CD8-positive, alpha-beta T cell (primary cell): ENCODE measurements at regions of chr6 and their contacts with region 1.

Region 1: DNA sequence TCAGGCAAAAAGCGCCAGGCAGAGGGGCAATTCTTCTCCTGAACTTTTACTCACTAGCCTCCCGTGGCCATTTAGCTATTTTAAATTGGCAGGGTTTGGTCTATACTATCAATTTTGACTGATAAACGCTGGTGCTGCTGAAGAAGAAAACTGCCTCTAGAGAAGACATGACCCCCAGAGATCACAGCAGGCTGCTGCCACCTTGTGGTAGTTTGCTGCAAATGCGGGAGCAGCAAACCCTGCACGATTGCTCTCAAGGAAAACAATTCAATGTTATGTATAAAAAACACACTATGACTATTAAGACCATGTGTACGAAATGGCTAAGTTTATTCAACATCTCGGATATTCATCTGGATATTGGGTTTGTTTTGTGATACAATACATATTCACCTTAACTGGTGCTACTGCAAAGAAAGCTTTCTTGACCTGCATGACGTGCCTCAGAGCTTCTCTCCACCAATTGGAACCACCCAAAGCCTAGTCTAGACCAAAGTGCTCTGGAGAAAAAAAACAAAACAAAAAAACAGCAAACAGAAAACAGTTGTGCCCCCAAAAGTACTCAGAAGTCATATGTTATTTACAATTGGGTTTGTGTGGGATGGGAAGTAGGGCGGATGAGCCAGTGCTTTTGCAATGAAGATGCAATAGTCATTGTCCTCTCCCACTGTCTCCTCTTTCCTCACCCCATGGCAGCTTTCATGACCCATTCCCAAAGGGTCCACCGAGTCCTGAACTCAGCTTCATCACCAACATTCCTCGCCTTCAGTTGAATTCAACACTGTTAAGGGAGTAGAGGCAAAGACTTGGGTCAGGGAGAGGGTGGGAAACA is 19.6 kb upstream of the IL17F start:
- DNase-seq: peak; percentile 44 to 79 (median 67)
- ATAC-seq: peak; percentile 79
- H3K4me3 ChIP-seq: no peak overlapping the region
- H3K4me3 Mint-ChIP-seq: no peak overlapping the region
- H3K27ac ChIP-seq: no peak overlapping the region
- H3K27ac Mint-ChIP-seq: no peak overlapping the region
- H3K4me1 ChIP-seq: peaks cover 12% of the 10 kb centered on the region
- H3K4me1 Mint-ChIP-seq: peaks cover 14% of the 10 kb centered on the region
- H3K27me3 ChIP-seq: no peaks in the 10 kb centered on the region
- H3K27me3 Mint-ChIP-seq: no peaks in the 10 kb centered on the region
- CTCF ChIP-seq: peak; percentile 96

Region 2: GRCh38 chr6:50816115-50816675 is 1447.7 kb before region 1 on chr6:
- CTCF ChIA-PET with region 1: no interaction called
- POLR2A ChIA-PET with region 1: no interaction called
- intact Hi-C with region 1: loop called in 1 of 2 experiments (anchors 5 kb)
- DNase-seq: peak in 8 of 9 experiments; percentile 19 to 54 (median 38)
- ATAC-seq: no peak
- H3K4me3 ChIP-seq: peak overlapping the region; percentile 24 to 39
- H3K4me3 Mint-ChIP-seq: peak overlapping the region; percentile 82
- H3K27ac ChIP-seq: no peak overlapping the region
- H3K27ac Mint-ChIP-seq: no peak overlapping the region
- H3K4me1 ChIP-seq: no peaks in the 10 kb centered on the region
- H3K4me1 Mint-ChIP-seq: peaks cover 19% of the 10 kb centered on the region
- H3K27me3 ChIP-seq: peaks cover 6 to 9% of the 10 kb centered on the region in 2 experiments
- H3K27me3 Mint-ChIP-seq: peaks cover 59% of the 10 kb centered on the region
- CTCF ChIP-seq: peak; percentile 55

Region 3: DNA sequence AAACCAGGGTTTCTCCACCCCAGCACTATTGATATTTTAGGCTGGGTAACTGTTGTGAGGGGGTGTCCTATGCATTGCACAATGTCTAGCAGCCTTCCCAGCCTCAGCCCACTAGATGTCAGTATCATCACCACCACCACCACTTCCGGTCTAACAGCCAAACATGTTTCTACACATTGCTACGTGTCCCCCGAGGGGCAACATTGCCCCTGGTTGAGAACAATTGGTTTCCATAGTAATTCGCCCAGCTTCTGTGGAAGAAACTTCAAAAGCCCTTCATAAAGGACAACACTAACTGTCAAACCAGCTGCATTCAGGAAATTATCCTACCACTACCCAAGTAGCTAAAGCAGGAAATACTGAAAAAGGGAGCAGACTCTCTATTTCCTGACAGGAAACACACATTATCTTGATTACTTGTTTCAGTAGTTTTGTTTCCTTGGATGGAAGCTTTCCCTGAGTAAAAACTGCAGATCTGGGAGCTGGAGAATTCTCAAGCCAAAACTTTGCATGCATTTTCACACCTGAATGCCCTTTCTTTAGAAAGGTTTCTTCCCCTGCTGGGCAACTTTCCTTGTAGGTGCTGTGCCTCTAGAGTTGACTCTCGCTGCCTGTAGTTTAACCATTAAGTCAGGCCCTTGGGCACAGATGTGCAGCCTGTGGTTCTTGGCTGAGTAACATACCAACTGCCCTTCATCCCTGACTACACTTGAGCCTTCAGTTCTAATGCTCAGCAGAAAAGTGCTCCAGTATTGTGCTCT is 200.2 kb before region 1 on chr6:
- CTCF ChIA-PET with region 1: interaction called, 10 read pairs
- POLR2A ChIA-PET with region 1: interaction called, 3 read pairs
- intact Hi-C with region 1: loop called (anchors 1 to 2 kb)
- DNase-seq: peak; percentile 10 to 80 (median 59)
- ATAC-seq: peak; percentile 84
- H3K4me3 ChIP-seq: peak overlapping the region; percentile 17 to 27
- H3K4me3 Mint-ChIP-seq: peak overlapping the region; percentile 78
- H3K27ac ChIP-seq: no peak overlapping the region
- H3K27ac Mint-ChIP-seq: peak overlapping the region; percentile 79
- H3K4me1 ChIP-seq: peaks cover 13% of the 10 kb centered on the region
- H3K4me1 Mint-ChIP-seq: peaks cover 11% of the 10 kb centered on the region
- H3K27me3 ChIP-seq: no peaks in the 10 kb centered on the region
- H3K27me3 Mint-ChIP-seq: no peaks in the 10 kb centered on the region
- CTCF ChIP-seq: peak; percentile 49

Region 4: GRCh38 chr6:52162940-52163908 is 100.7 kb before region 1 on chr6:
- CTCF ChIA-PET with region 1: interaction called, 70 read pairs
- POLR2A ChIA-PET with region 1: no interaction called
- intact Hi-C with region 1: loop called (anchors 1 kb)
- DNase-seq: peak in 2 of 9 experiments; percentile 57 to 66
- ATAC-seq: peak; percentile 69
- H3K4me3 ChIP-seq: no peak overlapping the region
- H3K4me3 Mint-ChIP-seq: no peak overlapping the region
- H3K27ac ChIP-seq: no peak overlapping the region
- H3K27ac Mint-ChIP-seq: no peak overlapping the region
- H3K4me1 ChIP-seq: no peaks in the 10 kb centered on the region
- H3K4me1 Mint-ChIP-seq: no peaks in the 10 kb centered on the region
- H3K27me3 ChIP-seq: peaks cover 0 to 2% of the 10 kb centered on the region in 2 experiments
- H3K27me3 Mint-ChIP-seq: peaks cover 15% of the 10 kb centered on the region
- CTCF ChIP-seq: peak; percentile 67

Region 5: GRCh38 chr6:52213127-52213526 is 50.8 kb before region 1 on chr6:
- CTCF ChIA-PET with region 1: interaction called, 12 read pairs
- POLR2A ChIA-PET with region 1: no interaction called
- intact Hi-C with region 1: no loop called
- DNase-seq: peak in 2 of 9 experiments; percentile 6 to 7
- ATAC-seq: no peak
- H3K4me3 ChIP-seq: no peak overlapping the region
- H3K4me3 Mint-ChIP-seq: no peak overlapping the region
- H3K27ac ChIP-seq: no peak overlapping the region
- H3K27ac Mint-ChIP-seq: no peak overlapping the region
- H3K4me1 ChIP-seq: no peaks in the 10 kb centered on the region
- H3K4me1 Mint-ChIP-seq: no peaks in the 10 kb centered on the region
- H3K27me3 ChIP-seq: peaks cover 0 to 5% of the 10 kb centered on the region in 2 experiments
- H3K27me3 Mint-ChIP-seq: peaks cover under 1% of the 10 kb centered on the region
- CTCF ChIP-seq: no peak

Region 6: DNA sequence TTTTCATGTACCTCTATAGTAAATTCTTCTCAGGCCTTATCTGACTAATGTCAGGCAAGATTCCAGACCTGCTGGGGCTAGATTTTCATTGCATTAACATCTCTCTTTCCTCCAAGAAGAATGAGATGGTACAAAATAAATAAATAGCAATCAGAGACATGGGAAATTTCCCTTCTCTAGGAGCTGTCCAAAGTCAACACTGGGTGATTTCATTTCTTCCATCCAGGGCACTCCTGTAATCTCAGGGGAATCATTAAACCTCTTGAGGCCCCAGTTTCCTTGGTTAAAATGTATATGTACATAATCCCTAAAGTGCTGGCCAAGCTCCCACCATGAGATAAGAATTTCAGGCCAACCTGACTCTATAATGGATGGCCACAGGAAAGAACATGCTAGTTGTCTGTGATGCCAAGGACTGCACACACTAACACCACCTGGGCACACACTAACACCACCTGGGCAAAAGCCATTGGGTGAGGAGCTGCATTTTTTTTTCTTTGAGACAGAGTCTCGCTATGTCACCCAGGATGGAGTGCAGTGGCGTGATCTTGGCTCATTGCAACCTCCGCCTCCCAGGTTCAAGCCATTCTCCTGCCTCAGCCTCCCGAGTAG is 20.5 kb before region 1 on chr6:
- CTCF ChIA-PET with region 1: interaction called, 14 read pairs
- POLR2A ChIA-PET with region 1: no interaction called
- intact Hi-C with region 1: no loop called
- DNase-seq: no peak
- ATAC-seq: no peak
- H3K4me3 ChIP-seq: no peak overlapping the region
- H3K4me3 Mint-ChIP-seq: no peak overlapping the region
- H3K27ac ChIP-seq: no peak overlapping the region
- H3K27ac Mint-ChIP-seq: no peak overlapping the region
- H3K4me1 ChIP-seq: no peaks in the 10 kb centered on the region
- H3K4me1 Mint-ChIP-seq: peaks cover 6% of the 10 kb centered on the region
- H3K27me3 ChIP-seq: peaks cover 0 to 2% of the 10 kb centered on the region in 2 experiments
- H3K27me3 Mint-ChIP-seq: peaks cover 8% of the 10 kb centered on the region
- CTCF ChIP-seq: no peak

Region 7: GRCh38 chr6:52399511-52400312 is 135.8 kb after region 1 on chr6:
- CTCF ChIA-PET with region 1: interaction called, 10 read pairs
- POLR2A ChIA-PET with region 1: interaction called, 4 read pairs
- intact Hi-C with region 1: no loop called
- DNase-seq: peak in 6 of 9 experiments; percentile 25 to 76 (median 52)
- ATAC-seq: peak; percentile 52
- H3K4me3 ChIP-seq: no peak overlapping the region
- H3K4me3 Mint-ChIP-seq: peak overlapping the region; percentile 53
- H3K27ac ChIP-seq: peak overlapping the region; percentile 45 to 75
- H3K27ac Mint-ChIP-seq: peak overlapping the region; percentile 93
- H3K4me1 ChIP-seq: peaks cover 71% of the 10 kb centered on the region
- H3K4me1 Mint-ChIP-seq: peaks cover 82% of the 10 kb centered on the region
- H3K27me3 ChIP-seq: no peaks in the 10 kb centered on the region
- H3K27me3 Mint-ChIP-seq: no peaks in the 10 kb centered on the region
- CTCF ChIP-seq: peak; percentile 96